ENCODE measurements at regions of chr3 and their contacts with region 1.

Region 1: DNA sequence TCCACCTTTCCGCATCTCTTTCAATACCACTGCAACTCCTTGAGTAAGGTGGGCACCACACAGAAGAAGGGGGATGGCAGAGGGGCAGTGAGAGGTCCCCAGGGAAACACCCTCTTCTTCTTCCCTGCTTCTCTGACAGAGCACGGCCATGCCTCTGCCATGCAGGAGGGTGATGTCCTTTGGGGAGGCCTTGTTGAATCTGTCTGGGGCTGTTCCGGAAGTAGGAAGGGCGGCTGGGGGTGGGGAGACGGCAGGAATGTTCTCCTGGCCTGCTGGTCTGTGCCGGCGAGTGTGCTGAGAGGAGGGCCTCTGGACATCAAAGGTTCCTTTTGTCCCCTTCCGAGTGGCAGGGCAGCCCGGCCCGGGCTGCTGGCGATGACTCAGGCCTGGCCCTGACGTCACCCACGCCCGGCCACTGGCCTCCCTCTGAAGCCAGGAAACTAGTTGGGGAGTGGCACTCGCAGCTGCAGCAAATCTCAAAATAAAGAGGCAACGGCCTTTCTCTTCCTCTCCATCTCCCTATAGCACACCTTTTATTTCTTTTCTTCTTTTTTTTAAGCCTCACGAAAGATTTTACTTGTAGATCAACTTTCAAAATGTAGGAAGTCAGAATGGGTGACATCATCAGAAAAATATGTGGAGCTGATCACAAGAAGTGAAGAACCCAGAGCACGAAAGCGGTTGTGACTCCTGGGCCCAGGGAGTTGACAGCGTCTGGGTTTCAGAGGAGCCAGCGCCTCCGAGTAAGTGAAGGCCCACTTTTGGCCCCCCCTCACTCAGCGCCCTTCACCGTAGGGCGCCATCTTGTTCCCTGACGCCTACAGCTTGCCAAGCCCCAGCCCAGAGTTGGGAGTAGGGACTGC is at the start of gene ZBTB38:
- DNase-seq: peak; percentile 93 to 94
- ATAC-seq: peak; percentile 84 to 91 (median 88)
- H3K4me3 ChIP-seq: peak within 1 kb of the TSS; percentile 54
- H3K27ac ChIP-seq: peak within 1 kb of the TSS; percentile 86
- H3K4me1 ChIP-seq: peaks cover 21% of the 10 kb centered on the region
- H3K27me3 ChIP-seq: no peaks in the 10 kb centered on the region
- CTCF ChIP-seq: no peak
- total RNA-seq, gene ZBTB38: 56.7 to 212 (median 87.0) TPM

Region 2: DNA sequence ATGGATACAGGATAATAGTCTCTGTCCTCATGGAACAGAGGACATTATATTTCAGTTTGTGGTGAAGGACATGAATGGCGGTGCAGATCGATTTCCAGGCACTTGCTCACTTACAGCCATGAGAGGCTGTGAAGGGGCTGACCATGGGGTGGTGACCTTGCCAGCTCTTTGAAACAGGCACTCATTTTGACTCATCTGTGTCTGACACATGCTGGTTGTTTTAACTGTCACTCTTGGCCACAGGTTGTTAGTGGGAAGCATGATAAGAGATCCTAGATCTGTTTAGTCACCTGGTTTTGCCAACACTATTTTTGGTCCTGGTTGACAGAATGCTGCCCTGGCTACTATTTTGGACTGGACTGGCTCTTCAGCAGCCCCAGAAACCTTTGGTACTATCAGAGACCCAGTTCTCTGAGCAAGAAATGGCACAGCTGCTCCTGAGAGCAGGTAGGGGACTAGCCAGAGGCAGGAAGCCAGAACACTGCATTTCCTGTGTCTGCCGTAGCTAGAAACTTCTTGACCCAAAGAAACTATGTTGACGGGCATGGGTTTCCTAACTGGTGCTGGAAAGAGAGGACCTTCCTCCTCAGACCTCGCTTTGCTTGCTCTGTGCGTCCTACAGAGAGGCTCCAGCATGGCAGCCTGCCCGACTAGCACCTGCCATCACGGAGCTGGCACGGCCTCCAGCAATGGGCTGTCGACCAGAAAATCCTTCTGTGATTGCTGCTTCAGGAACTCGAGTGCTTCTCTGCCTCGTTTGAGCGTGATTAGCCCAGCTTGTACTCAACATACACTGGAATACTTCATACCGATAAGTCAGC is 130.4 kb before region 1 on chr3:
- intact Hi-C with region 1: loop called in 1 of 2 experiments (anchors 5 kb)
- DNase-seq: peak; percentile 67 to 88
- ATAC-seq: peak; percentile 77 to 84 (median 82)
- H3K4me3 ChIP-seq: peak overlapping the region; percentile 17
- H3K27ac ChIP-seq: peak overlapping the region; percentile 93
- H3K4me1 ChIP-seq: peaks cover 59% of the 10 kb centered on the region
- H3K27me3 ChIP-seq: no peaks in the 10 kb centered on the region
- CTCF ChIP-seq: no peak

Region 3: GRCh38 chr3:141311496-141312353 is 56.6 kb before region 1 on chr3:
- intact Hi-C with region 1: loop called in 1 of 2 experiments (anchors 5 kb)
- DNase-seq: peak; percentile 98 to 99
- ATAC-seq: peak; percentile 97 to 100 (median 98)
- H3K4me3 ChIP-seq: peak overlapping the region; percentile 88
- H3K27ac ChIP-seq: peak overlapping the region; percentile 86
- H3K4me1 ChIP-seq: no peaks in the 10 kb centered on the region
- H3K27me3 ChIP-seq: no peaks in the 10 kb centered on the region
- CTCF ChIP-seq: peak; percentile 72

Region 4: DNA sequence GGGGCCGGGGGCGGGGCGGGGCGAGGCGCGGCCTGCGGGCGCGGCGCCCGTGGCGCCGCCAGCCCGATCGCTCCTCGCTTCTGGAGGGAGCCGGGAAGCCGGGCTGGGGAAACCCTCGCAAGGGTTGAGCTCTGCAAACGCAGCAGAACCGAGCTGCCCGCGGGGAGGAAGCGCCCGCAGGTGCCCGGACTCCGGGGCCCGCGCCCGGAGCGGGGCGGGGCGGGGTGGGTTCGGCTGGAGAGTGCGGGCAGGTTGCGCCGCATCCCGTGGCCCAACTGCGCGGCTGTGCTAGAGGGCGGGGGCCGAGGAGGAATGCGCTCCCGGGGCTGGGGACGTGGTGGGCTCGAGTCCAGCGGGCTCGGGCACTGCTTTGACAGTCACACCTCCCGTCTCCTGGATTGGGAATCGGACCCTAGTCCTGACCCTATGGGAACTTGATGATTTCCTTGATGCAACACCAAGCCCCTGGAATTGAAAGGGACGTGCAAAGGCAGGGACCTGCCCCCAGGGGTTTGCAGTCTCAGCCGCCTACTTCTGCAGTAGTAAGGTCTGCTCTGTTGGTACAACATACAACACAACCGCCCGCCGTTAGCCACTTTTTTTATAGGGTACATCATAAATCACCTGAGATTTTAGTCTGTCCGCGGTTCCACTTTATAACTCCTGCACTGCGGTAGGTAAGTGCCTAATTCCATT is 34.3 kb after region 1 on chr3:
- intact Hi-C with region 1: loop called (anchors 2 to 5 kb)
- DNase-seq: peak; percentile 80 to 87
- ATAC-seq: peak; percentile 78 to 82 (median 80)
- H3K4me3 ChIP-seq: peak overlapping the region; percentile 84
- H3K27ac ChIP-seq: peak overlapping the region; percentile 96
- H3K4me1 ChIP-seq: peaks cover 36% of the 10 kb centered on the region
- H3K27me3 ChIP-seq: no peaks in the 10 kb centered on the region
- CTCF ChIP-seq: no peak

Region 5: GRCh38 chr3:141412087-141412935 is 44.0 kb after region 1 on chr3:
- intact Hi-C with region 1: loop called in 1 of 2 experiments (anchors 1 kb)
- DNase-seq: peak in 1 of 2 donors; percentile 69
- ATAC-seq: peak; percentile 43 to 78 (median 63)
- H3K4me3 ChIP-seq: peak overlapping the region; percentile 64
- H3K27ac ChIP-seq: peak overlapping the region; percentile 96
- H3K4me1 ChIP-seq: peaks cover 53% of the 10 kb centered on the region
- H3K27me3 ChIP-seq: no peaks in the 10 kb centered on the region
- CTCF ChIP-seq: no peak